Common myeloid progenitor, CD34-positive (primary cell): ENCODE measurements at regions of chr12 and their contacts with region 1.

Region 1: DNA sequence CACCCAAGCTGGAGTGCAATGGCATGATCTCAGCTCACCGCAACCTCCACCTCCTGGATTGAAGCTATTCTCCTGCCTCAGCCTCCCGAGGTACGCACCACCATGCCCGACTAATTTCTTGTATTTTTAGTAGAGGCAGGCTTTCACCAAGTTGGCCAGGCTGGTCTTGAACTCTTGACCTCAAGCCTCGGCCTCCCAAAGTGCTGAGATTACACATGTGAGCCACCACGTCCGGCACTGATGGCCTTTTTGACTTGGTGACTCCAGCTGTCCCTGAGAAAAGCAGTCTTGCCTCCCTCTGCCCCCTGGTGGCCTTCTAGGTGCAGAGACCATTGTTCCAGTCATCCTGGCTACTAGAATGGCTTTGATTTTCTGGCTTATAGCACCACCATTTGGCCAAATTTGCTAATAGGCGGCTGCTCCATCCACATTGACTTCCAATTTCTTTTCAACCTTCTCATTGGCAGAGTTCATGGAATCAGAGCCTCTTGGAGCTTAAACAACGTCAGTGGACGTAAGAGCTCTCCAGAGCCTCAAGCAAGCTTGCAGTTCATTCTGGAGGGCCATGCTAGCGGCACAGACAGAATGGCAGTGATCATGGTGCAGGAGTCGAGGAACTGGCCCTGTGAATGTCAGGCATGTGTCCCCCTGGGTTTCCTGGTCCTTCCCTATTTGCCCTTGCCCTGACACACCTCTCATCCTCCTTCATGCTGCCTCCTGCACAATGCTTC is 25.4 kb upstream of the EIF4B start:
- DNase-seq: peak; percentile 89 to 95 (median 90)
- H3K4me3 ChIP-seq: no peak overlapping the region
- H3K27ac ChIP-seq: no peak overlapping the region
- H3K4me1 ChIP-seq: no peaks in the 10 kb centered on the region
- H3K27me3 ChIP-seq: peaks cover 0 to 2% (median 0%) of the 10 kb centered on the region in 5 experiments

Region 2: DNA sequence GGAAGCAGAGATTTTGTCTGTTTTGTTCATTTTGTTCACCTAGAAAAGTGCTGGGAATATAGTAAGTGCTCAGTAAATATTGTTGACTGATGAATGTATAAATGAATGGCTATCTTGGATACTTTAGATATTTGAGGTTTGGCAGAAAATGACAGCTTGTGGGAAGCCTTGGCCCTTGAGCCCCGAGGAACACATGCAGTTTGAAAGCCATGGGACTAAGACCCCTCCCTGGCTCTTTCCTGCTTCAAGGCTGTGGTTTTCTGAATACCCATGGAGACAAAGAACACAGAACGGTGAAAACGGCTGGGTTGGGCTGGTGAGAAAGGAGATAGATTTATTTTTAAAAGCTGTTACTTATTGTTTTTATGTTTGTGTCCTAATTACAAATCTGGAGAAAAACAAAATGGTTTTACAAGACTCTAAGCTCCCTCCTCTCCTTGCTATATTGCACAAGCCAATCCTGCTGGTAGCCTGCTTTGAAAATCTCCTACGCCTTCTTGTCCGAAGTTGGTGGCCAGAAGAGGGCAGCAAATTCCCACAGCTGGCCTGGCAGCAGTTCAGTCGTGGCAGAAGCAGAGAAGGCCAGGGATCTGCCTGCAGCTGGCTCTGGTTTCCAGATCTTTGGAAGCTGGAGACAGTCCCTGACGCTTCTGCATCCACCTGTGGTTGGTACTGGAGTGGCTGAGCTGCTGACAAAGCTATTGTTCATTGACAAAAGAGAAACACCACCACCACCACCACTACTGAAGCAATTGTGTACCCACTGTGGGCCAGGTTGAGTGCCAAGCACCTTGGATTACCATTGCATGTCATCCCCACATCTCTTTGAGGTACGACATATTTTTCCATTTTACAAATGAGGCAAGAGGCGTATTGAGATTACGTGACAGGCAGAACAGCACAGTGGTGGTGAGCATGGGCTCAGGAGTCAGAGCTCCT is 608.4 kb before region 1 on chr12:
- CTCF ChIA-PET with region 1: interaction called, 19 read pairs
- POLR2A ChIA-PET with region 1: no interaction called
- DNase-seq: peak; percentile 78 to 90 (median 86)
- H3K4me3 ChIP-seq: no peak overlapping the region
- H3K27ac ChIP-seq: no peak overlapping the region
- H3K4me1 ChIP-seq: no peaks in the 10 kb centered on the region
- H3K27me3 ChIP-seq: peaks cover 0 to 7% (median 5%) of the 10 kb centered on the region in 5 experiments

Region 3: DNA sequence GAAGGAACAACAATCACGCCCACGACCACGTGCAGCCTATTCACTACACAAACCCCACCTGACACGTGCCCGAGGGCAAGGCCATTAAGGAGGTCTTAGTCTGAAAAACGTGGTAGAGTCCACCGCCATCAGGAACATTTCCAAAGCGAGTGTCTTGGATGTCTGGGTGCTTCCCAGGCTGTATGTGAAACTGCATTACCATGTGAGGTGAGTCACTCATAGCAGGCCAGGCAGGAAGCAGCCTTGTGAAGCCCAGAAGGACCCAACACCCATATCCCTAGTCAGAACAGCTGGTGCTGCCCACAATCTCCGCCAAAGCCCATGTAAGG is 143.5 kb before region 1 on chr12:
- CTCF ChIA-PET with region 1: no interaction called
- POLR2A ChIA-PET with region 1: no interaction called
- DNase-seq: peak in 1 of 3 donors; percentile 10
- H3K4me3 ChIP-seq: no peak overlapping the region
- H3K27ac ChIP-seq: no peak overlapping the region
- H3K4me1 ChIP-seq: peaks cover 0 to 15% (median 6%) of the 10 kb centered on the region in 4 experiments
- H3K27me3 ChIP-seq: peaks cover 0 to 4% (median 0%) of the 10 kb centered on the region in 5 experiments

Region 4: GRCh38 chr12:52903285-52903854 is 77.5 kb before region 1 on chr12:
- CTCF ChIA-PET with region 1: interaction called, 44 read pairs
- POLR2A ChIA-PET with region 1: no interaction called
- DNase-seq: peak; percentile 87 to 93 (median 92)
- H3K4me3 ChIP-seq: peak overlapping the region; percentile 4 to 77 (median 56)
- H3K27ac ChIP-seq: peak overlapping the region; percentile 58 to 74
- H3K4me1 ChIP-seq: peaks cover 3 to 37% (median 33%) of the 10 kb centered on the region in 4 experiments
- H3K27me3 ChIP-seq: no peaks in the 10 kb centered on the region

Region 5: GRCh38 chr12:52949413-52950331 is 31.2 kb before region 1 on chr12:
- CTCF ChIA-PET with region 1: interaction called, 14 read pairs
- POLR2A ChIA-PET with region 1: no interaction called
- DNase-seq: peak in 2 of 3 donors; percentile 48 to 61
- H3K4me3 ChIP-seq: peak overlapping the region in 6 of 7 experiments; percentile 5 to 84 (median 67)
- H3K27ac ChIP-seq: peak overlapping the region; percentile 33 to 83
- H3K4me1 ChIP-seq: peaks cover 0 to 20% (median 3%) of the 10 kb centered on the region in 4 experiments
- H3K27me3 ChIP-seq: peaks cover 0 to 12% (median 0%) of the 10 kb centered on the region in 5 experiments

Region 6: GRCh38 chr12:52992699-52993557 is 12.1 kb after region 1 on chr12:
- CTCF ChIA-PET with region 1: interaction called, 17 read pairs
- POLR2A ChIA-PET with region 1: interaction called, 3 read pairs
- DNase-seq: no peak
- H3K4me3 ChIP-seq: no peak overlapping the region
- H3K27ac ChIP-seq: no peak overlapping the region
- H3K4me1 ChIP-seq: no peaks in the 10 kb centered on the region
- H3K27me3 ChIP-seq: no peaks in the 10 kb centered on the region